A549 (cell line): ENCODE measurements at regions of chr4 and their contacts with region 1.

Region 1: DNA sequence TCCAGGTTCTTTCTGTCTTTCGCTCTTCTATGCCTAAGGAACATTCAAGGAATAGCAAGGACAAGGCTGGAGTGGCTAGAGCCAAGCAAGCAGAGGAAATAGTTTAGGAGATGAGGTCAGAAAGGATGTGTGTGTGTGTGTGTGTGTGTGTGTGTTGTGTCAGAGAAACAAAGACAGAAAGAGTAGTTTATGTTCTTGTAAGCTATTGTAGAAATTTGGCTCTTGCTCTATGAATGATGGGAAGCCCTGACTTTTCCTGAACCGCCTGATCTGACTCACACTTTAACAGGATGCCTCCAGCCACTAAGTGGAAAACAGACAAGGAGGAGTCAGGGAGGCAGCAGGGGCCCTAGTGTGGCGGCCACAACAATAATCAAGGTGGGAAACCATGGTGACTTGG is 39.7 kb downstream of the LGI2 start:
- DNase-seq: no peak
- ATAC-seq: no peak
- H3K4me3 ChIP-seq: no peak overlapping the region
- H3K27ac ChIP-seq: no peak overlapping the region
- H3K4me1 ChIP-seq: no peaks in the 10 kb centered on the region
- CTCF ChIP-seq: no peak
- EP300 ChIP-seq: no peak
- POLR2A ChIP-seq: no peak
- RAD21 ChIP-seq: no peak

Region 2: GRCh38 chr4:24831637-24832036 is 159.4 kb before region 1 on chr4:
- CTCF ChIA-PET with region 1: no interaction called
- POLR2A ChIA-PET with region 1: no interaction called
- DNase-seq: no peak
- ATAC-seq: no peak
- H3K4me3 ChIP-seq: no peak overlapping the region
- H3K27ac ChIP-seq: no peak overlapping the region
- H3K4me1 ChIP-seq: no peaks in the 10 kb centered on the region
- CTCF ChIP-seq: no peak
- EP300 ChIP-seq: no peak
- POLR2A ChIP-seq: no peak
- RAD21 ChIP-seq: no peak

Region 3: DNA sequence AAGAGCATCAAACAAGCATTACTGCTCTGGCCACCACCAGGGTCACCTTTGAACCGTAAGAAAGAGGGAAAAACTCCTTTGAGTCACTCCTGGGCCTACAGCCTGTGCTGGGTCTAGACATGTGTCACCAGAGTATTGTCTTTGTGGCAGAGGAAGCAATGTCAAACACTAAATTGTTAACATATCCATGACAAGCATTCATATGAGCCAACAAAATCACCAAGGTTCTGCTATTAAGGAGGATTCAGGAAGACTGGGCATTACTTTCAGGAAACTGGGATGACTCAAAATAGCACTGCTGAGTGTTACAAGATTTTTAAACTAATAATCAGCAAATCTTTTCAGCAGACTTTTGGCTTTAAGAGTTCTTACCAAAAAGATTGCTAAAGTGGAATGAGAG is 11.7 kb after region 1 on chr4:
- CTCF ChIA-PET with region 1: no interaction called
- POLR2A ChIA-PET with region 1: no interaction called
- DNase-seq: no peak
- ATAC-seq: no peak
- H3K4me3 ChIP-seq: no peak overlapping the region
- H3K27ac ChIP-seq: no peak overlapping the region
- H3K4me1 ChIP-seq: no peaks in the 10 kb centered on the region
- CTCF ChIP-seq: no peak
- EP300 ChIP-seq: no peak
- POLR2A ChIP-seq: no peak
- RAD21 ChIP-seq: no peak

Region 4: DNA sequence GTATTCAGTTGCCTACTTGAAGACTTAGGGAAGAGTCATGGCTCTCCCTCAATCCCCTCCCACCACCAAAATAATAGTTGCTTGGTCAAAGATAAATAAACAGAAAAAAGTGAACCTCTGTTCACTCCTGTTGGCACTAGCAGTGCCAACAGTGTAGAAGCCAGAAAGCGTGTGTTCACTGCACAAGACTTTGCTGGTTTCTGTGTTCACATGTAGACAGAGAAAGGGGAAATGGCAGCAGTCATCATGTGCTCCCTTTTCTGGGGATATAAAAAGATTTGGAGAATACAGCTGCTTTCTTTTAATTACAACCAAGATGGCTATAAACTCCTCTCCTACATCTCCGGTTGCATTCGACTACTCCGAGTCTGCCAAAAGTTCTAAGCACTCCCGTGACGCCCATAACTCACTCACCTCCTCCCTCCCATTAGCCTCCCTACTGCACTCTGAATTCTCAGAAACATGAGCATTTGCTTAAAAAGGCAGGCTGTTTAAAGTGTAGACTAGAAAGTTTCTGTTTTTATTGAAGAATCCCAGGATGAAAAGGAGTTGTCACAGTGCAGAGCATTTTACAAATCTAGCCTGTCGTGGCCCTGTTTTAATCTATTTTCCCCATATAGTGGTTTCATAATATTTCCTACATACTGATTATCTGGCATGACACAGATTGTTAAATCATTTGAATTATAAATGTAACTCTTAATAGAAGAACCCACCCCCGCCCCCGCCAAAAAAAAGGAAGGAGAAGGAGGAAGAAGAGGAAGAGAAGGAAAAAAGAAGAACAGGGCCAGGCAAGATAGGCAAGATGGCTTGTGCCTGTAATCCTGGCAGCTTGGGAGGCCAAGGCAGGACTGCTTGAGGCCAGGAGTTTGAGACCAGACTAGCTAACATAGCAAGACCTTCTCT is 23.0 kb after region 1 on chr4:
- CTCF ChIA-PET with region 1: no interaction called
- POLR2A ChIA-PET with region 1: interaction called, 10 read pairs
- DNase-seq: no peak
- ATAC-seq: no peak
- H3K4me3 ChIP-seq: no peak overlapping the region
- H3K27ac ChIP-seq: no peak overlapping the region
- H3K4me1 ChIP-seq: no peaks in the 10 kb centered on the region
- CTCF ChIP-seq: no peak
- EP300 ChIP-seq: no peak
- POLR2A ChIP-seq: no peak
- RAD21 ChIP-seq: no peak